Caco-2 (cell line): ENCODE measurements at regions of chr7 and their contacts with region 1.

Region 1: GRCh38 chr7:50467817-50468610 is 17.9 kb upstream of the FIGNL1 start:
- DNase-seq: peak; percentile 83 to 88
- H3K4me3 ChIP-seq: no peak overlapping the region
- H3K4me3 Mint-ChIP-seq: no peak overlapping the region
- H3K27ac Mint-ChIP-seq: peak overlapping the region; percentile 30
- H3K4me1 ChIP-seq: no peaks in the 10 kb centered on the region
- H3K4me1 Mint-ChIP-seq: peaks cover 6% of the 10 kb centered on the region
- H3K27me3 ChIP-seq: no peaks in the 10 kb centered on the region
- H3K27me3 Mint-ChIP-seq: no peaks in the 10 kb centered on the region
- CTCF ChIP-seq: peak; percentile 83 to 86

Region 2: DNA sequence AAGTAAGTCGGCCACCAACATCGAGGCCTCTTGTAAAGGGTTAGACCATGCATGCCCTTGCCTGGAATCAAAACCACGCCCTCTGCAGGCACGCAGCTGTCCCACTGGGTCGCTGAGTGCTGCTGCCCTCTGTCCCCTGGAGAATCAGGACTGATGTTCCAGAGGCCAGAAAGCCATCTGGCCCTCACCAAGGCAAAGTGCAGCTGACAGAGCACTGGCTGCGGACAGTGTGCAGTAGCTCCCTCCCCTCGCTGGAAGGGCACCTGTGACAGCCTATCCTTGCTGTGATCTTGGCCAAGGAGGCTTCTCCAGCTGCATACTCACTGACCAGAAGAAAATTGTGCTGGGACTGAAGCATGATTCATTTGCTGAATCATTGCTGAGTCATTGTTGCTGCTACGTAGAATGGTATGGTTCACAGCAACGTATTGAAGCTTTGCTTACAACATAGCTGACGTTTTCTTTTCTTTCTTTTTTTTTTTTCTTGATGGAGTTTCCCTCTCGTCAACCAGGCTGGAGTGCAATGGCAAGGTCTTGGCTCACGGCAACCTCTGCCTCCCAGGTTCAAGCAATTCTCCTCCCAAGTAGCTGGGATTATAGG is 66.8 kb after region 1 on chr7:
- CTCF ChIA-PET with region 1: no interaction called
- POLR2A ChIA-PET with region 1: no interaction called
- intact Hi-C with region 1: loop called (anchors 1 kb)
- DNase-seq: peak; percentile 43 to 77
- H3K4me3 ChIP-seq: no peak overlapping the region
- H3K4me3 Mint-ChIP-seq: no peak overlapping the region
- H3K27ac Mint-ChIP-seq: peak overlapping the region; percentile 28
- H3K4me1 ChIP-seq: peaks cover 61% of the 10 kb centered on the region
- H3K4me1 Mint-ChIP-seq: peaks cover 32% of the 10 kb centered on the region
- H3K27me3 ChIP-seq: no peaks in the 10 kb centered on the region
- H3K27me3 Mint-ChIP-seq: no peaks in the 10 kb centered on the region
- CTCF ChIP-seq: no peak

Region 3: DNA sequence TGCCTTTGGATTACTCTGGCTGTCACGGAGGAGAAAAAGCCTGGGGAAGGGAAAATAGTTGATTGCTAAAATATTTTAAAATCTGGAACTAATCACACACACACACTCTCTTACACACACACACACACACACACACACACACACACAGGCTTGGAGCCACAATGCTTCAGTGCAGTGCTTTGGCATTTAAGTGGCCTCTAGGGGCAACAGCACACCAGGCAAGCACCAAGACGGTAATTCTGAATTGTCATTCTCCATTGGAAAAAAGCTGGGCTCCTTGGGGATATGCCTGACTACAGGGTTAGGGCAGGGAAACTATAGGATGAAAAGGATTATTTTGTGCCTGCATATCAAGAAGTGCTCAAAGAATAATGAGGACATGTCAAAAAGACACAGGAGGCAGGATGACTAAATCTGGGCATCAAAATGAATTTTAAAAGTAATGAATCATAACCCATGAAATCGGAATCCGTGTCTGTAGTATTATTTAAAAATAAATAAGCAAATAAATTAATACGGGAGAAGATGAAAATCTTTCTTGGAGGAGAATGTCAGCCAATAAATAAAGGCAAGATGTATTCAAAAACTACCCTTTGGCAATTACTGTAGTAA is 127.6 kb after region 1 on chr7:
- CTCF ChIA-PET with region 1: no interaction called
- POLR2A ChIA-PET with region 1: no interaction called
- intact Hi-C with region 1: loop called (anchors 5 kb)
- DNase-seq: peak; percentile 53 to 57
- H3K4me3 ChIP-seq: no peak overlapping the region
- H3K4me3 Mint-ChIP-seq: no peak overlapping the region
- H3K27ac Mint-ChIP-seq: no peak overlapping the region
- H3K4me1 ChIP-seq: no peaks in the 10 kb centered on the region
- H3K4me1 Mint-ChIP-seq: peaks cover 6% of the 10 kb centered on the region
- H3K27me3 ChIP-seq: no peaks in the 10 kb centered on the region
- H3K27me3 Mint-ChIP-seq: no peaks in the 10 kb centered on the region
- CTCF ChIP-seq: peak; percentile 27 to 67

Region 4: DNA sequence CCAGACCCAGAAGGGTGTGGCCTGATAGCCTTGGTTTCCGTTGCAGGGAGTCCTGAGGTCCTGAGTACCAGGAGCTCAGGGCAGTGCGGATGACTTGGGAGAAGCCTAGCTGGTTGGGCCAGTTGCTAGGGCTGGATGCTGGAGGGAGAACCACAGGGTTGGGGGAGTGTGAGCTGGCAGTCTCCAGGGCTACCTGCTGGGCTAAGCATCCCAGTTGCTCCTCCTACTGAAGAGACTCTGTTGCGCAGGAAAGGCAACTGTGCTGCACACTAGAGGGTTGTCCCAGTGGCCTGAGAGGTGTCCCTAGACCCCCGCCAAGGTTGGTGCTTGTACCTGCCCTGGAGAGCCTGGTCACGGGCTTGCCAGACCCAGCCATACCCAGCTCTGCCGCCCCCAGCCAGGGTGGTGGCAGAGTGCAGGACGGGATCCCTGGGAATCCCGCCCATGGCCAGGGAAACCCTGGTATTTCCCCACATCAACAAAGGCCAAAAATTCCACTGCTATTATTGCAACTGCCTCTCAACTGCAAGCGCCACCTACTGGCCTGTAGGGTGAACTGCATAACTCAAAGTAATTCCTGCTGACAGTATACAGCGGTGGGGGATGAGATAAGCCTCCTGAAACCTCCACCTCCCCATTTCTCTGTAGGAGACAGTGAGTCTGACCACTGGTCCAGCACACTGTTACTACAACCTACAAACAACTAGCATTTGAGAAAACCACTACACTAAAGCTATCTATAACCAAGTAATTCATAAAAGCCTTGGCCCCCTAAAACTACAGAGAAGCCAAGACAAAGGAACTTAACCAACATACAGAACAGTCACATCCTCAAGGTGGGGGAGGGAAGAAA is 164.8 kb after region 1 on chr7:
- CTCF ChIA-PET with region 1: no interaction called
- POLR2A ChIA-PET with region 1: no interaction called
- intact Hi-C with region 1: loop called (anchors 1 kb)
- DNase-seq: peak; percentile 61 to 72
- H3K4me3 ChIP-seq: no peak overlapping the region
- H3K4me3 Mint-ChIP-seq: no peak overlapping the region
- H3K27ac Mint-ChIP-seq: no peak overlapping the region
- H3K4me1 ChIP-seq: peaks cover 9% of the 10 kb centered on the region
- H3K4me1 Mint-ChIP-seq: peaks cover 21% of the 10 kb centered on the region
- H3K27me3 ChIP-seq: no peaks in the 10 kb centered on the region
- H3K27me3 Mint-ChIP-seq: no peaks in the 10 kb centered on the region
- CTCF ChIP-seq: peak; percentile 90 to 94